ENCODE measurements at regions of chr4 and their contacts with region 1.

Region 1: GRCh38 chr4:104064646-104065577 is 345.1 kb upstream of the TACR3 start:
- DNase-seq: peak; percentile 27
- ATAC-seq: peak; percentile 45

Region 2: DNA sequence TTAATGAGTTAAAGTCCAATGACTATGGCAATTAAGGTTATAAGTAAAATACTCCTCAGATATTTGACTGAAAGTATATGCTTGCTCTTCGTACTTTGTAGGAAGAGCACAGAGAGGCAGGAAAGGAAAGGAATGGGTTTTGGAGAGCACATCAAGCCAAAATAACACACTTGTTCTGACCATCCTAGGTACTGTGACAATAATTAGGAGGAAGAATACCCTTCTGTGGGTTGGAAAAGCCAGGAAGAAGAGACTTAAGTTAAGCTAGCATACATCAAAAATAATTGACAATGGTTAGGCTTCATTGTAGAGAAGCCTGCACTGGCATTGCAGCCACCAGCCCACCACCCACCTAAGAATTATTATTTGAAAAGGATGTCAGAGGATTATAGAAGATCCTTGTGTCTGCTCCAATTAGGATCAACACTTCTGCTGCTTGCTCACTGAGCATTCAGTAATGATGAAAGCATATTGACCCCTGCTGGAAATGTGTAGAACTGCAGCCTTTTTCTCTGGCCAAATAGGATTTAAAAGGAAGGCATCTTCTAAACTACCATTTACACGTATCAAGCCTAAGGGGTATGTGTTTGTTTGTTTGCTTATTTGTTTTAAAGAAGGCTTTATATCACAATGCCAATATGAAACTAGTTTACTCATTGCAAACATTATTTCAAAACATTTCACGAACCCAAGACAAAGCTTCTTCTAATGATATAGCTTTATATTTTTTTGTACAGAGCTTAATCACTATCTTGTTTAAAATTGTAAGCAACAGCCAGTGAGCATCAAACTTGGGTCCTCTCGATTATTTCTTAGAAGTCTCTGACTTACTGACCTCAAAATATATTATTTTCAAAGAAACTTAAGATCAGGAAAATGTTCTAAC is 795.6 kb after region 1 on chr4:
- intact Hi-C with region 1: loop called (anchors 2 kb)
- DNase-seq: no peak
- ATAC-seq: peak; percentile 83

Measured in left ventricle myocardium superior (tissue), 1 donor.